Naive thymus-derived CD4-positive, alpha-beta T cell (primary cell): ENCODE measurements at regions of chr1 and their contacts with region 1.

Region 1: GRCh38 chr1:1033009-1033587 is 13.2 kb downstream of the AGRN start:
- DNase-seq: peak; percentile 67 to 93 (median 79)
- ATAC-seq: peak; percentile 94
- H3K4me3 ChIP-seq: peak overlapping the region; percentile 43
- H3K4me3 Mint-ChIP-seq: peak overlapping the region in 7 of 10 donors; percentile 39 to 76 (median 62)
- H3K27ac ChIP-seq: no peak overlapping the region
- H3K27ac Mint-ChIP-seq: peak overlapping the region in 1 of 9 donors; percentile 52
- H3K4me1 ChIP-seq: peaks cover 0 to 5% of the 10 kb centered on the region in 2 donors
- H3K4me1 Mint-ChIP-seq: peaks cover 0 to 8% (median 6%) of the 10 kb centered on the region in 7 donors
- H3K27me3 ChIP-seq: peaks cover 0 to 16% of the 10 kb centered on the region in 2 donors
- H3K27me3 Mint-ChIP-seq: peaks cover 3 to 23% (median 14%) of the 10 kb centered on the region in 5 donors

Region 2: DNA sequence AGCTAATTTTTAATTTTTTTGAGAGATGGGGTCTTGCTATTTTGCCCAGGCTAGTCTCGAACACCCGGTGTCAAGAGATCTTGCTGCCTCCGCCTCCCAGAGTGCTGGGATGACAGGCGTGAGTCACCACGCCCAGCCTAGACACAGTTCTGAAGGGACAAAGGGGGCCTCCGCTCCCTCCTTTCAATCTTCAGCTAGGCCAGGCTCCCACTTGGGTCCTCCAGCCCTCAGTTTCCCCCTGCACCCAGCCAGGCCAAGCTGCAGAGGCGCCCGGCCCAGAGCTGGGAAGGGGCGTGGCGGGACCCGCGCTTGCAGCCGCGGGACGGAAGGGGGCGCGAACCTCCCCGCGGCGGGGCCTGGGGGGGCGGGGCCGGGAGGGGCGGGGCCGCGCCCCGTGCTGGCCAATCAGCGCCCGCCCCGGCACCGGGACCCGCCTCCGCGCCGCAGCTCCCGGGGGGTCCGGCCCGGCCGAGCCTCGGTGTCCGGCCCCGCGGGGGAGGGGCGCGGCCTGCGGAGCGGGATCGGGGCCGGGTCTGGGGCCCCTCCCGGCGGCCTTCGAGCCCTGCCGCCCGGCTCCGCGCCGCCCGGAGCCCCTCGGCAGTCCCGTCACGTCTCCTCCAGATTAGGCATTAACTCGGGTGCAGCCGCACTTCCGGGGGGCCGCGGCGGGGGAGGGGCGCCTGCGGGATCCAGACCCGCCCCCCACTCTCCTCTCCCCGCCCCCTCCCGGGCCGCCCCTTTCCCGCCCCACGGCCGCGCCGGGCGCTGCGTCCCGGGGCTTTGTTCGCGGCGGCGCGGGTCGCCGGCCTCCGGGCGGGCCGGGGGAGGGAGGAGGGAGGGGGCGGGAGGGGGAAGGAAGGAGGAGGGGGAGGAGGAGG is 13.7 kb before region 1 on chr1:
- CTCF ChIA-PET with region 1: interaction called, 9 read pairs
- POLR2A ChIA-PET with region 1: interaction called, 5 read pairs
- intact Hi-C with region 1: loop called (anchors 1 kb)
- DNase-seq: peak; percentile 69 to 90 (median 82)
- ATAC-seq: peak; percentile 93
- H3K4me3 ChIP-seq: peak overlapping the region; percentile 11
- H3K4me3 Mint-ChIP-seq: peak overlapping the region in 9 of 10 donors; percentile 48 to 80 (median 68)
- H3K27ac ChIP-seq: peak overlapping the region; percentile 27
- H3K27ac Mint-ChIP-seq: peak overlapping the region in 4 of 9 donors; percentile 40 to 65 (median 55)
- H3K4me1 ChIP-seq: peaks cover 4 to 10% of the 10 kb centered on the region in 2 donors
- H3K4me1 Mint-ChIP-seq: peaks cover 9 to 26% (median 15%) of the 10 kb centered on the region in 7 donors
- H3K27me3 ChIP-seq: no peaks in the 10 kb centered on the region
- H3K27me3 Mint-ChIP-seq: peaks cover 0 to 17% (median 0%) of the 10 kb centered on the region in 5 donors

Region 3: GRCh38 chr1:1069061-1069708 is 36.1 kb after region 1 on chr1:
- CTCF ChIA-PET with region 1: interaction called, 16 read pairs
- POLR2A ChIA-PET with region 1: no interaction called
- intact Hi-C with region 1: loop called in 1 of 2 experiments (anchors 1 kb)
- DNase-seq: peak; percentile 86 to 98 (median 92)
- ATAC-seq: peak; percentile 83
- H3K4me3 ChIP-seq: peak overlapping the region; percentile 81
- H3K4me3 Mint-ChIP-seq: peak overlapping the region; percentile 52 to 88 (median 78)
- H3K27ac ChIP-seq: peak overlapping the region; percentile 73
- H3K27ac Mint-ChIP-seq: peak overlapping the region in 6 of 9 donors; percentile 36 to 88 (median 72)
- H3K4me1 ChIP-seq: peaks cover 4 to 10% of the 10 kb centered on the region in 2 donors
- H3K4me1 Mint-ChIP-seq: peaks cover 0 to 9% (median 3%) of the 10 kb centered on the region in 7 donors
- H3K27me3 ChIP-seq: no peaks in the 10 kb centered on the region
- H3K27me3 Mint-ChIP-seq: no peaks in the 10 kb centered on the region

Region 4: GRCh38 chr1:1291548-1292441 is 258.7 kb after region 1 on chr1:
- CTCF ChIA-PET with region 1: no interaction called
- POLR2A ChIA-PET with region 1: no interaction called
- intact Hi-C with region 1: loop called in 1 of 2 experiments (anchors 2 kb)
- DNase-seq: peak; percentile 51 to 71 (median 58)
- ATAC-seq: peak; percentile 76
- H3K4me3 ChIP-seq: no peak overlapping the region
- H3K4me3 Mint-ChIP-seq: no peak overlapping the region
- H3K27ac ChIP-seq: no peak overlapping the region
- H3K27ac Mint-ChIP-seq: peak overlapping the region in 1 of 9 donors; percentile 14
- H3K4me1 ChIP-seq: no peaks in the 10 kb centered on the region
- H3K4me1 Mint-ChIP-seq: peaks cover 0 to 4% (median 0%) of the 10 kb centered on the region in 7 donors
- H3K27me3 ChIP-seq: no peaks in the 10 kb centered on the region
- H3K27me3 Mint-ChIP-seq: no peaks in the 10 kb centered on the region